Colonic mucosa (tissue), 4 donors: ENCODE measurements at regions of chr2 and their contacts with region 1.

Region 1: GRCh38 chr2:210203157-210203947 is 21.9 kb downstream of the ACADL start:
- DNase-seq: no peak
- H3K4me3 ChIP-seq: no peak overlapping the region
- H3K27ac ChIP-seq: no peak overlapping the region
- H3K4me1 ChIP-seq: no peaks in the 10 kb centered on the region
- H3K27me3 ChIP-seq: no peaks in the 10 kb centered on the region
- CTCF ChIP-seq: no peak

Region 2: GRCh38 chr2:209334198-209335017 is 868.9 kb before region 1 on chr2:
- intact Hi-C with region 1: loop called (anchors 10 kb)
- DNase-seq: peak; percentile 33
- H3K4me3 ChIP-seq: no peak overlapping the region
- H3K27ac ChIP-seq: no peak overlapping the region
- H3K4me1 ChIP-seq: no peaks in the 10 kb centered on the region
- H3K27me3 ChIP-seq: no peaks in the 10 kb centered on the region
- CTCF ChIP-seq: peak; percentile 82